Vagina (tissue), 2 donors: ENCODE measurements at regions of chr19 and their contacts with region 1.

Region 1: GRCh38 chr19:13588957-13589833 is 82.9 kb upstream of the CACNA1A start:
- DNase-seq: no peak
- H3K4me3 ChIP-seq: no peak overlapping the region
- H3K27ac ChIP-seq: no peak overlapping the region
- H3K4me1 ChIP-seq: no peaks in the 10 kb centered on the region
- H3K27me3 ChIP-seq: no peaks in the 10 kb centered on the region
- CTCF ChIP-seq: peak; percentile 70 to 91 (median 87)
- POLR2A ChIP-seq: no peak

Region 2: DNA sequence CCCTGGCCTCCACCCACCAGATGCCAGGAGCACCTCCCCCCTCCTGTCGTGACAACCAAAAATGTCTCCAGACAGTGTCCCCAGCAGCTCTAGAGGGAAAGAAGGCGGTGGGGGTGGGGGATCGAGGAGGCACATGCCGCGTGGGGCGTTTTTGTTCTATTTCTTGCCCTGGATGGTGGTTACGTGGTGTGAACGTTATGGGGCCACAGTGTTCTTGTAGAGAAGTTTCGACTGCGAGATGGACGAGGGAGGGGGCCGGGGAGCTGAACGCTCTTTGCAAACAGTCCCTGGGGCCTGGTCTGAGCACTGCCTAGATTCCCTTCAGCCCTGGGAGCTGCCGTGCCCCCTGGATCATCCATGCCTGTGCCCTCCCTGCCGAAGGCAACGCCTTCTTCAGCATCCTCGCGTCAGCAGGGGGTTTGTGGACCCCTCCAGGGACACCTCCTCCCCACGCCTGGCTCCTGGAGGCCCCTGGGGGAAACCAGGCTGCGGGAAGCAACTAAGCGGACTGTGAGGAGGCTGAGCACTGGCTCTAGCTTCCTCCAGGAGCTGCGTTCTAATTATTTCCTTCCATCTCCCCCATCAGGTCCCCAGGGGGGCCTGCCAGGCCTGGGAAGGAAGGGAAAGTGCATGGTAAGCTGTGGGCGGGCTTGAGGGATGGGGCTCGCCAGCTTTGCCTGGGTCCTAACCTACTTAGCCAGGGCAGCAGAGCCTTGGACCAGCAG is 307.5 kb before region 1 on chr19:
- intact Hi-C with region 1: loop called (anchors 5 kb)
- DNase-seq: no peak
- H3K4me3 ChIP-seq: no peak overlapping the region
- H3K27ac ChIP-seq: no peak overlapping the region
- H3K4me1 ChIP-seq: no peaks in the 10 kb centered on the region
- H3K27me3 ChIP-seq: no peaks in the 10 kb centered on the region
- CTCF ChIP-seq: no peak
- POLR2A ChIP-seq: no peak

Region 3: DNA sequence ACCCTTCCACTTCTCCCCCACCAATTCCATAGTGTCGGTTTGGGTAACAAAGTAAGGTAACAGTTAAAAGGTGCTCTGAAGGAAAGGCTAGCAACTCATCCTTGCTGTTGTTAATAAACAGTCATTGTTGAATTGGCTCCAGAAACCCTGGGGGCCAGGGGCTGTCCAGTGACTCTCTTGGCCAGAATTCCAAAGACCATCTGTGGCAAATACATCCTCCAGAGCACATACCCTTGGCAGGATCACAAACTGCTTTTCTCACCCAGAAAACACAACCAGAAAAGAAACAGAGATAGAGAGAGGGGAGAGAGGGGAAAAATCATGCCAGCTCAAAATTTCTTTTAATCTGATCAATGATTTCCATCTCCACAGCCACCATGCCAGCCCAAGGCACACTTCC is 105.0 kb before region 1 on chr19:
- intact Hi-C with region 1: no loop called
- DNase-seq: no peak
- H3K4me3 ChIP-seq: no peak overlapping the region
- H3K27ac ChIP-seq: no peak overlapping the region
- H3K4me1 ChIP-seq: no peaks in the 10 kb centered on the region
- H3K27me3 ChIP-seq: no peaks in the 10 kb centered on the region
- CTCF ChIP-seq: no peak
- POLR2A ChIP-seq: no peak